ENCODE measurements at regions of chr12 and their contacts with region 1.

Region 1: DNA sequence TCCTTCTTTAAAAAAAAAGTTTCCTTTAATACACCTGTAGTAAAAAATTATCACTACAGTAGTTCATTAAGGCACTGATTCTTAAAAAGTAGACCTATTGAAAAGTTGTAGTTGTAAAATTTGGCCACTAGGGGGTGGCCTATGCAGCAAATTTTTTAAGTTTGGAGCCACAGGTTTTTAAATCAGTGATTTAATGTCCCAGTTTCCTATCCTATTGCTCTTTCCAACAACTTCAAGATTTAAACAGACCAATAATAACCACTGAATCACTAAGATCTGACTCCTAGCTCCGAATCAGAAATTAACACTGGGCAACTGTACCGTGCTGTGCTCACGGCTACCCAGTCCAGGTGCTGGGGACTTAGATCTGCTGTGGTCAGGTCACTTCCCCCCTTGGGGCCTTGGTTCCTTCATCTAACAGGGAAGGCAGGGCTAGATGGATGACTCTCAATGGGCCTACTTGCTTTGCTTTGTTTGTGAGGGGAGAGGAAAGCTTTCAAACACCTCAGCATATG is 279.3 kb downstream of the MED13L start:
- H3K4me3 Mint-ChIP-seq: no peak overlapping the region
- H3K27ac Mint-ChIP-seq: no peak overlapping the region
- H3K4me1 Mint-ChIP-seq: no peaks in the 10 kb centered on the region
- H3K27me3 Mint-ChIP-seq: no peaks in the 10 kb centered on the region

Region 2: DNA sequence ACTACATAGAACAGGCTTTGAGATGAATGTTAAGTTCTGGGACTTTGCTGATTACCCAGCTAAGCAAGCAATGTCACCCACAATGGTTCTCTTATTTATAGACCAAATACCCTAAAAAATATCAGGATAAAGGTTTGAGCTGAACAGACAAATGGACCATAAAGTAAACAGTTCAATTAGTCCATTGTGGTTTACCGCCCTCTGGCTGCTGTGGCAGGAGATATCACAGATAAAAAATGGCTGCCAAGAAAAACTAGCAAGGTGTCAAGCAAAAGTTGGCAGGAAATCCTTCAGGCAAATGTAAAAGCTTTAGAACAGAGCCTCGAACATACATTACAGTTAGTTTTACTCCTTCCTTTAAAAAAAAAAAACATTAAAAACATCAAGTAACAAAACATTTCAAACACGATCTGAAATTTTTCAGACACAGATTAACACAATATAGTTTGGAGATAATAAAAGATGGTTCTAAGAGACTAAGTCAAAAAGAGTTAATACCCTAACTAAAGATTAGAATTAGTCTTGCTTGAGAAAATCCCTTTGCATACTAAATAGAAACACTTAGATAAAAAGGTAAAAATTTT is 238.1 kb after region 1 on chr12:
- intact Hi-C with region 1: loop called (anchors 5 kb)
- H3K4me3 Mint-ChIP-seq: no peak overlapping the region
- H3K27ac Mint-ChIP-seq: no peak overlapping the region
- H3K4me1 Mint-ChIP-seq: peaks cover 26% of the 10 kb centered on the region
- H3K27me3 Mint-ChIP-seq: no peaks in the 10 kb centered on the region

Region 3: GRCh38 chr12:116599285-116600136 is 601.3 kb after region 1 on chr12:
- intact Hi-C with region 1: loop called (anchors 5 kb)
- H3K4me3 Mint-ChIP-seq: peak overlapping the region; percentile 71
- H3K27ac Mint-ChIP-seq: peak overlapping the region; percentile 91
- H3K4me1 Mint-ChIP-seq: peaks cover 42% of the 10 kb centered on the region
- H3K27me3 Mint-ChIP-seq: peaks cover 7% of the 10 kb centered on the region

Region 4: GRCh38 chr12:116708826-116709756 is 710.9 kb after region 1 on chr12:
- intact Hi-C with region 1: loop called (anchors 2 kb)
- H3K4me3 Mint-ChIP-seq: peak overlapping the region; percentile 50
- H3K27ac Mint-ChIP-seq: no peak overlapping the region
- H3K4me1 Mint-ChIP-seq: peaks cover 10% of the 10 kb centered on the region
- H3K27me3 Mint-ChIP-seq: peaks cover 26% of the 10 kb centered on the region